Naive thymus-derived CD8-positive, alpha-beta T cell (primary cell): ENCODE measurements at regions of chr17 and their contacts with region 1.

Region 1: GRCh38 chr17:39730095-39730921 is at the start of gene MIEN1:
- DNase-seq: peak; percentile 85 to 99 (median 95)
- ATAC-seq: peak; percentile 86 to 93
- H3K4me3 Mint-ChIP-seq: peak within 1 kb of the TSS; percentile 85 to 95 (median 91)
- H3K27ac Mint-ChIP-seq: peak within 1 kb of the TSS; percentile 82 to 97 (median 94)
- H3K4me1 Mint-ChIP-seq: peaks cover 9 to 26% (median 24%) of the 10 kb centered on the region in 4 donors
- H3K27me3 Mint-ChIP-seq: no peaks in the 10 kb centered on the region
- polyA plus RNA-seq, gene MIEN1: 75.6 to 81.6 (median 76.7) TPM

Region 2: DNA sequence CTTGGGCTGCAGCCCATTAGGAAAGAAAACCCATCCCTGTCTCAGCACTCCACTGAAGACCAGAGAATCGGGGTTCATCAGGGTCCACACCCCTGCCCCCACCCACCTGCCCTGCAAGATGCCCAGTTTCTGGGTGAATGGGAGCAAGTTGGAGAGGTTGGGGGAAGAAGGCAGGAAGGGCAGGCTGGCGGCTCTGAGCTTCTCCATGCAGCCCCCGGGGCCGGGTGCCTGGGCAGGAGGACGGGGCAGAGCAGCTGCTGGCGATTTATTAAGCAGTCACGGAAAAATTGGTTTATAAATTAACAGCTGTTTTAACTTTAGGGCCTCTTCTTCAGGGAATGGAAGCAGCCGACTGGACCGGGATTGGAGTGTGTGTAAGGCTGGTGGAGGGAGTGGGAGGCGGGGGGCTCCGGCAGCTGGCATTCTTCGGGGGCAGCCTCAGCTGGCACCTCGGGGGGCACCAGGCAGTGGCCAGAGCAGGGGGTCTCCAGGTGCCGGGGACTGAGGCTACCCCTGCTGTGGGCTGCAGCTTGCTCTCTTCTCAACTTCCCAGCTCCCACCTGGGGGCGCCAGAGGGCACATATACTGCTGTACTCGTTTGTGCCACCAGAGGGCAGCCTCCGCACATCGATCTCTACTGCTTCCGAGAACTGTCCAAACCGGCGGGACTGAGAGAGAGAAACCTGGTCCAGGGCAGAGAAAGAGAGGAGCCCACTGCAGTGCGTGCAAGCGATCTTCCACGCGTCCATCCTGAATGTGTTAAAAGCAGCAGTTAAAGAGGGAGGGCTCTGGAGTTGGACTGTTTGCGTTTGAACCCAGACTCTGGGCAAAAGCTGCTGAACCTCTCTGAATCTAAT is 108.6 kb before region 1 on chr17:
- POLR2A ChIA-PET with region 1: interaction called, 25 read pairs
- DNase-seq: peak; percentile 75 to 98 (median 87)
- ATAC-seq: peak; percentile 54 to 67
- H3K4me3 Mint-ChIP-seq: peak overlapping the region; percentile 26 to 82 (median 51)
- H3K27ac Mint-ChIP-seq: peak overlapping the region in 9 of 10 donors; percentile 5 to 75 (median 57)
- H3K4me1 Mint-ChIP-seq: peaks cover 15 to 41% (median 29%) of the 10 kb centered on the region in 4 donors
- H3K27me3 Mint-ChIP-seq: peaks cover 8 to 25% (median 18%) of the 10 kb centered on the region in 5 donors

Region 3: GRCh38 chr17:39668199-39668966 is 61.9 kb before region 1 on chr17 and contains the start of gene PNMT:
- POLR2A ChIA-PET with region 1: interaction called, 16 read pairs
- DNase-seq: peak; percentile 45 to 84 (median 66)
- ATAC-seq: peak; percentile 76 to 80
- H3K4me3 Mint-ChIP-seq: peak within 1 kb of the TSS; percentile 62 to 87 (median 74)
- H3K27ac Mint-ChIP-seq: peak within 1 kb of the TSS in 6 of 10 donors; percentile 61 to 92 (median 74)
- H3K4me1 Mint-ChIP-seq: peaks cover 15 to 43% (median 32%) of the 10 kb centered on the region in 4 donors
- H3K27me3 Mint-ChIP-seq: peaks cover 0 to 16% (median 4%) of the 10 kb centered on the region in 5 donors
- polyA plus RNA-seq, gene PNMT: 0.43 to 0.64 TPM in 2 of 3 donors, not detected in the other

Region 4: DNA sequence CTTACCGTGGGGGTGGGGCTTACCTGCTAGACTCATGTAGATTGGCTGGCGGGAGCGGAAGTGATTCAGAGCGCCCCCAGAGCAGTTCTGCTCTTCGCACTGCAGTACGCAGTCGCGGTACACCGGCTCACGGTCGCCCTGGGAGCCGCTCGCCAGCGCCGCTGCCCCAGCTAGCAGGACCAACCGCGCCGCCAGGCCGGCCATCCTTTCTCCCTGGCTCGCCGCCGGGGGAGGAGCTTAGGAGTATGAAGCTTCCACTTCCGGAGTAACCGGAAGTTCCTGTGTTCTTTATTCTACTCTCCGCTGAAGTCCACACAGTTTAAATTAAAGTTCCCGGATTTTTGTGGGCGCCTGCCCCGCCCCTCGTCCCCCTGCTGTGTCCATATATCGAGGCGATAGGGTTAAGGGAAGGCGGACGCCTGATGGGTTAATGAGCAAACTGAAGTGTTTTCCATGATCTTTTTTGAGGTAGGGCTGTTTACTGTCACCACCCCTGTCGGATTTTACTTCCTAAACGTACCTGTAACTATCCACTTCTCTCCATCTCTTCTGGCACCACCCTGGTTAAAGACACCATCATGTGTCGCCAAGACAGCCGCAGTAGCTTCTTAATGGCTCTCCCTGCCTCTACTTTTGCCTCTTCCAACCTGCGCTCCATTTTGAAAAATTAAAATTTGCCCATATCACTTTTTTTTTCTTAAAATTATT is 42.3 kb before region 1 on chr17 and contains the start of gene PGAP3:
- POLR2A ChIA-PET with region 1: interaction called, 22 read pairs
- DNase-seq: peak; percentile 73 to 92 (median 80)
- ATAC-seq: peak; percentile 89 to 93
- H3K4me3 Mint-ChIP-seq: peak within 1 kb of the TSS; percentile 97 to 99 (median 98)
- H3K27ac Mint-ChIP-seq: peak within 1 kb of the TSS; percentile 97 to 99 (median 98)
- H3K4me1 Mint-ChIP-seq: peaks cover 23 to 35% (median 30%) of the 10 kb centered on the region in 4 donors
- H3K27me3 Mint-ChIP-seq: no peaks in the 10 kb centered on the region
- polyA plus RNA-seq, gene PGAP3: 14.2 to 17.7 (median 15.5) TPM

Region 5: DNA sequence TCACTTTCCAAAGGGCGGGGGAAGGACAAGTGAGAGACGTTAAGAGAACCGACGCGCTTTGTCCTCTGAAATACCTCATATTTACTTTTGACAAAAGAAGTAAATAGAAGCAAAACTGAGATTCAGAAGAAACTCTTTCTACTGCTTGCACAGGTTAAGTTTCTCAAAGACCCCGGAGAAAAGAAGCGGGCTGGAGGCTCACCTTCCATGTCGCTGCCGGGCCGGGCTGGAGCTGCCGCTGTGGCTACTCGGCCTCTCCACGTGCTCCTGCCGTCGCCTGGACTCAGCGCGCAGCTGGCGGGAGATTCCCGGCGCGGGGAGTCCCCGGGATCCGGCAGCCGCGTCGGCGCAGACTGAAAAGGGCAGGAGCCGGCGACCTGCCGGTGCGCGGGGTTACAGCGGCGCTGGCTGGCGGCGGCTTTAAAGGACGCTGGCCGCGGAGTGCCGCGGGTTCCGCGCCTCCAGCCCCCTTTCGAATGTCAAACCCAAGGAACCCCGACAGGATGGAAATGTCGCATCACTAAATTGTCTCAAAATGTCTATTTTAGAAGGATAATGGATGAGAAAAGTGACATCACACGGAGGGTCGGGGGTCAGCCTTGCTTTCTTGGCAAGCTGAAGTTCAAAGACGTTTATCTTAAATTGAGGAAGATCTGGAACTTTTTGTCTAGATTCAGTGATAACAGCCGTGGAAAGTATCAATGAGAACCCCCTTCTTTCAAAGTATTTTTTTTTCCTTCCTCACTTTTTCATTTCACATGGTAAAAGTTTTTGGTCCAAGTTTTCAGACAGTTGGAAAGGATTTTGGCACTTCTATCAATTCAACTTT is 133.8 kb after region 1 on chr17 and contains the start of gene IKZF3:
- POLR2A ChIA-PET with region 1: interaction called, 12 read pairs
- DNase-seq: peak; percentile 71 to 87 (median 80)
- ATAC-seq: peak; percentile 75 to 85
- H3K4me3 Mint-ChIP-seq: peak within 1 kb of the TSS; percentile 92 to 99 (median 96)
- H3K27ac Mint-ChIP-seq: peak within 1 kb of the TSS; percentile 96 to 98 (median 98)
- H3K4me1 Mint-ChIP-seq: peaks cover 26 to 74% (median 64%) of the 10 kb centered on the region in 4 donors
- H3K27me3 Mint-ChIP-seq: no peaks in the 10 kb centered on the region
- polyA plus RNA-seq, gene IKZF3: 18.8 to 59.2 (median 21.5) TPM